Aorta (tissue), 5 donors: ENCODE measurements at regions of chr18 and their contacts with region 1.

Region 1: DNA sequence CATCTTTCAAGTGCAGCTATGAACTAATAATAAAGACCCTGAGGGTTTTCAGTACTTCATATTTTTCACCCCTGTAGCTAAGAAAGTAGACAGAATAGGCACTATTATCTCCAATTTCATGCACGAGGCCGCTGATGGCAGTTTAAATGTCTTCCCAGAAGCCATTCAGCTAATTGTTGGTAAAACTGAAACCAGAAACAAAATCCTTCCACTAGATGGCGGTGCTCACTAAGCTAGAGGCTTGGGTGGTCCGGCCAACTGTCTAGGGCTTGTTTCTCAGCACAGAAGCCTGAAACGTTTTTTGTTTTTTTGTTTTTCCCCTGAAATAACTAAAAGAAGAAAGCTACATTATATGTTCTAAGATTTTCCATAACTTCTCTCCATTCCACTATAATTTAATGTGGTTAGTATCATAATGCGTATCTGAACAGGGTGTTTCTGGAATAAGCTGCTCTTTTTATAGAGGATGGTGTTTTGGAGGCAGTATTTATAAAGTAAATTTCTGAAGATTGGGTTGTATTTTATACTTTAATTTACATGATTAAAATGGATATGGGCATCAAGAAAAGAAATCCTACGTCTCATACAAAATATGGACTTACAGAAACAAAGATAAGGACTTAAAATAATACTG is 159.4 kb downstream of the PIK3C3 start:
- DNase-seq: peak in 1 of 2 donors; percentile 50
- ATAC-seq: peak; percentile 92
- H3K4me3 ChIP-seq: no peak overlapping the region
- H3K27ac ChIP-seq: no peak overlapping the region
- H3K4me1 ChIP-seq: no peaks in the 10 kb centered on the region
- H3K27me3 ChIP-seq: no peaks in the 10 kb centered on the region

Region 2: GRCh38 chr18:42274488-42275137 is 160.2 kb after region 1 on chr18:
- intact Hi-C with region 1: loop called (anchors 10 kb)
- DNase-seq: no peak
- ATAC-seq: no peak
- H3K4me3 ChIP-seq: no peak overlapping the region
- H3K27ac ChIP-seq: no peak overlapping the region
- H3K4me1 ChIP-seq: no peaks in the 10 kb centered on the region
- H3K27me3 ChIP-seq: no peaks in the 10 kb centered on the region

Region 3: DNA sequence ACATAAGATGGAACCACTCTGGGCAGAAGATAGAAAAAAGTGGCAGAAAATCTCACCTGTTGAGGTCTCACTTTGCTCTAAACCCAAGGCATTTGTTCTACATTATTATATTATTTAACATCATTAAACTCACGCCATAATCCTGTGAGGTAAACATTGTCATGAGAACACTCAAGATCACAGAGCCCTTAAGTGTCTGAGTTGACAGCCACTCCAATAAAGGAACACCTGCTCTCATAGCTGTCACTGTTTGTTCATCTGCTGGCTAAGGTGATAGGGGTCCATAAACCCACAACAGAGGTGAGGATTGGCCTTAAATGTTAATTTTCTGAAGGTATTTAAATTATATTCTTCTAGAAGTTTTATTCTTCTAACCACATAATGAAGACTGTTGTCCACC is 561.4 kb after region 1 on chr18:
- intact Hi-C with region 1: no loop called
- DNase-seq: no peak
- ATAC-seq: no peak
- H3K4me3 ChIP-seq: no peak overlapping the region
- H3K27ac ChIP-seq: no peak overlapping the region
- H3K4me1 ChIP-seq: no peaks in the 10 kb centered on the region
- H3K27me3 ChIP-seq: no peaks in the 10 kb centered on the region

Region 4: GRCh38 chr18:43265465-43265864 is 1151.0 kb after region 1 on chr18:
- intact Hi-C with region 1: loop called (anchors 10 kb)
- DNase-seq: no peak
- ATAC-seq: no peak
- H3K4me3 ChIP-seq: no peak overlapping the region
- H3K27ac ChIP-seq: no peak overlapping the region
- H3K4me1 ChIP-seq: no peaks in the 10 kb centered on the region
- H3K27me3 ChIP-seq: no peaks in the 10 kb centered on the region

Region 5: GRCh38 chr18:43271593-43272432 is 1157.4 kb after region 1 on chr18:
- intact Hi-C with region 1: loop called (anchors 10 kb)
- DNase-seq: no peak
- ATAC-seq: no peak
- H3K4me3 ChIP-seq: no peak overlapping the region
- H3K27ac ChIP-seq: no peak overlapping the region
- H3K4me1 ChIP-seq: no peaks in the 10 kb centered on the region
- H3K27me3 ChIP-seq: peaks cover 0 to 1% of the 10 kb centered on the region in 2 donors